ENCODE measurements at regions of chr1 and their contacts with region 1.

Region 1: GRCh38 chr1:113811888-113812660 is at the start of gene RSBN1:
- DNase-seq: peak; percentile 98 to 100 (median 99)
- H3K4me3 ChIP-seq: peak within 1 kb of the TSS; percentile 96 to 97
- H3K4me3 Mint-ChIP-seq: peak within 1 kb of the TSS; percentile 96 to 100 (median 99)
- H3K27ac ChIP-seq: peak within 1 kb of the TSS; percentile 93
- H3K27ac Mint-ChIP-seq: peak within 1 kb of the TSS; percentile 96 to 100 (median 99)
- H3K4me1 ChIP-seq: peaks cover 36% of the 10 kb centered on the region
- H3K4me1 Mint-ChIP-seq: peaks cover 22 to 45% (median 29%) of the 10 kb centered on the region in 4 donors
- H3K27me3 ChIP-seq: no peaks in the 10 kb centered on the region
- H3K27me3 Mint-ChIP-seq: no peaks in the 10 kb centered on the region
- total RNA-seq, gene RSBN1: 58.7 to 60.2 TPM

Region 2: GRCh38 chr1:112955781-112956543 is 856.1 kb before region 1 on chr1 and contains the start of gene SLC16A1:
- CTCF ChIA-PET with region 1: no interaction called
- POLR2A ChIA-PET with region 1: interaction called, 7 read pairs
- intact Hi-C with region 1: loop called (anchors 10 kb)
- DNase-seq: peak; percentile 85 to 89 (median 87)
- H3K4me3 ChIP-seq: peak within 1 kb of the TSS; percentile 59 to 96
- H3K4me3 Mint-ChIP-seq: peak within 1 kb of the TSS; percentile 76 to 99 (median 97)
- H3K27ac ChIP-seq: peak within 1 kb of the TSS; percentile 80
- H3K27ac Mint-ChIP-seq: peak within 1 kb of the TSS; percentile 68 to 98 (median 95)
- H3K4me1 ChIP-seq: peaks cover 34% of the 10 kb centered on the region
- H3K4me1 Mint-ChIP-seq: peaks cover 38 to 73% (median 52%) of the 10 kb centered on the region in 4 donors
- H3K27me3 ChIP-seq: no peaks in the 10 kb centered on the region
- H3K27me3 Mint-ChIP-seq: no peaks in the 10 kb centered on the region
- total RNA-seq, gene SLC16A1: 9.7 to 12.7 TPM

Region 3: GRCh38 chr1:113389953-113390834 is 421.9 kb before region 1 on chr1 and contains the start of gene MAGI3:
- CTCF ChIA-PET with region 1: no interaction called
- POLR2A ChIA-PET with region 1: interaction called, 3 read pairs
- intact Hi-C with region 1: loop called (anchors 1 kb)
- DNase-seq: peak; percentile 92 to 94 (median 93)
- H3K4me3 ChIP-seq: peak within 1 kb of the TSS; percentile 44 to 89
- H3K4me3 Mint-ChIP-seq: peak within 1 kb of the TSS; percentile 88 to 98 (median 92)
- H3K27ac ChIP-seq: peak within 1 kb of the TSS; percentile 60
- H3K27ac Mint-ChIP-seq: peak within 1 kb of the TSS; percentile 80 to 95 (median 91)
- H3K4me1 ChIP-seq: peaks cover 30% of the 10 kb centered on the region
- H3K4me1 Mint-ChIP-seq: peaks cover 20 to 36% (median 23%) of the 10 kb centered on the region in 4 donors
- H3K27me3 ChIP-seq: no peaks in the 10 kb centered on the region
- H3K27me3 Mint-ChIP-seq: no peaks in the 10 kb centered on the region
- total RNA-seq, gene MAGI3: 6.5 to 6.7 TPM

Region 4: GRCh38 chr1:113783254-113784099 is 28.6 kb before region 1 on chr1:
- CTCF ChIA-PET with region 1: interaction called, 11 read pairs
- POLR2A ChIA-PET with region 1: interaction called, 57 read pairs
- intact Hi-C with region 1: loop called (anchors 1 kb)
- DNase-seq: peak; percentile 66 to 84 (median 73)
- H3K4me3 ChIP-seq: peak overlapping the region in 1 of 2 donors; percentile 14
- H3K4me3 Mint-ChIP-seq: peak overlapping the region in 7 of 8 donors; percentile 44 to 89 (median 72)
- H3K27ac ChIP-seq: peak overlapping the region; percentile 48
- H3K27ac Mint-ChIP-seq: peak overlapping the region in 2 of 7 donors; percentile 77 to 93
- H3K4me1 ChIP-seq: peaks cover 100% of the 10 kb centered on the region
- H3K4me1 Mint-ChIP-seq: peaks cover 30 to 47% (median 38%) of the 10 kb centered on the region in 4 donors
- H3K27me3 ChIP-seq: no peaks in the 10 kb centered on the region
- H3K27me3 Mint-ChIP-seq: no peaks in the 10 kb centered on the region

Region 5: DNA sequence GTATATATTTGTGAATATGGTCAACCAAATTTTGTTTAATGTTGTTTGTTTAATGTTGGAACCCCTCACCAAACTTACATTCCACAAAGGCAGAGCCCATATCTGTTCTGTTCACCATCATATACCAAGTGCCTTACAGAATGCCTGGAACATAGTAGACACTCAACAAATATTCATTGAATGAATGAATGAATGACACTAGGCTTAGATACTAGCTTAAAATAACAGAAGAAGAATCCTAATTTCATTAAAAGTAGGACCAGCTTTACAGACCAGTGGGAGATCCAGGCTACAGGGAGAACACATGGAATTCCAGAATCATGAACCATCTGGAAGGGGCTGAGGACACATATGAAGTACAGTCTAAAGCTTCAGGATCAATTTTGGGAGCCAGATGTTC is 11.0 kb after region 1 on chr1:
- CTCF ChIA-PET with region 1: no interaction called
- POLR2A ChIA-PET with region 1: no interaction called
- intact Hi-C with region 1: no loop called
- DNase-seq: no peak
- H3K4me3 ChIP-seq: no peak overlapping the region
- H3K4me3 Mint-ChIP-seq: no peak overlapping the region
- H3K27ac ChIP-seq: no peak overlapping the region
- H3K27ac Mint-ChIP-seq: peak overlapping the region in 2 of 7 donors; percentile 4 to 74
- H3K4me1 ChIP-seq: no peaks in the 10 kb centered on the region
- H3K4me1 Mint-ChIP-seq: no peaks in the 10 kb centered on the region
- H3K27me3 ChIP-seq: no peaks in the 10 kb centered on the region
- H3K27me3 Mint-ChIP-seq: no peaks in the 10 kb centered on the region

Region 6: DNA sequence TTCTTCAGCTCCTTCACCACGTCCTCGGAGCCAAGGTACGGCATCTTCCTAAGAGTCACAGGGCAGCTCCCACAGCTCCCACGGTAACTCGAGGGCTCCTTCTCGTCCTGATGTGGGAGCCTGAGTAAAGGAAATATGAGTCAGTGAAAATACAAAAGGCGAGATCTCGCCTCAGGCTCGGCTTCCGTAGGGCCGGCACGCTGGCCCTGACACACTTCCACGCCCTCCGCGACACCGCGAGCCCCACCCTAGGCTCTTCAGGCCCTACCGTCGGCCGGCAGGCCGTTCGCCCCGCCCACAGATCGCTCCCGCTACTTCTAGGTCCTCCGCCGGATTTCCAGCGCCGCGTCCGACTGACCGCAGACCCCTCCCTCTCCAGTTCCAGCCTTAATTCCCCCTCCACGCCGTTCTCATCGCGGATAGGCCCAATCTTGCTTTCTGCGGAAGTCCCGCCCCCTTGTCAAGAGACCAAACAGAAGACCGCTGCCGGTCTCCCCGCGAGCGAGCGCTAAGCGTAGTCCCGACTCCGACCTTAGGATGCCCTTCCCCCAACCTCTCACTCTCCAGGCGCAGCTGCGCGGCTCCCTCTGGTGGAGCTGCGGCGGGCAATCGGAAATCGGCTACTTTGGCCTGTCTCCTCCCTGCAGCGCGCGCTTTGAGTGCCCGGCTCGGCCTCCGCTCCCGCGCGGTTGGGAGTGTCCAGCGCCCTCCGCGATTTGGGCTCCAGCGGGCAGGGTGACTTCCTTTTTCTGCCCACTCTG is 92.8 kb after region 1 on chr1 and contains the starts of genes AP4B1 and DCLRE1B:
- CTCF ChIA-PET with region 1: interaction called, 7 read pairs
- POLR2A ChIA-PET with region 1: interaction called, 43 read pairs
- intact Hi-C with region 1: loop called (anchors 1 kb)
- DNase-seq: peak; percentile 97 to 99 (median 98)
- H3K4me3 ChIP-seq: peak within 1 kb of the TSS; percentile 68 to 98
- H3K4me3 Mint-ChIP-seq: peak within 1 kb of the TSS; percentile 94 to 100 (median 99)
- H3K27ac ChIP-seq: peak within 1 kb of the TSS; percentile 96
- H3K27ac Mint-ChIP-seq: peak within 1 kb of the TSS; percentile 96 to 100 (median 100)
- H3K4me1 ChIP-seq: peaks cover 44% of the 10 kb centered on the region
- H3K4me1 Mint-ChIP-seq: peaks cover 36 to 74% (median 47%) of the 10 kb centered on the region in 4 donors
- H3K27me3 ChIP-seq: no peaks in the 10 kb centered on the region
- H3K27me3 Mint-ChIP-seq: no peaks in the 10 kb centered on the region
- total RNA-seq, gene AP4B1: 74.5 to 75.5 TPM
- total RNA-seq, gene DCLRE1B: 5.1 to 5.4 TPM

Region 7: GRCh38 chr1:114511032-114511785 is 699.1 kb after region 1 on chr1 and contains the start of gene TRIM33:
- CTCF ChIA-PET with region 1: no interaction called
- POLR2A ChIA-PET with region 1: no interaction called
- intact Hi-C with region 1: loop called (anchors 1 kb)
- DNase-seq: peak; percentile 91 to 95 (median 94)
- H3K4me3 ChIP-seq: peak within 1 kb of the TSS; percentile 75 to 85
- H3K4me3 Mint-ChIP-seq: peak within 1 kb of the TSS; percentile 97 to 100 (median 98)
- H3K27ac ChIP-seq: peak within 1 kb of the TSS; percentile 96
- H3K27ac Mint-ChIP-seq: peak within 1 kb of the TSS; percentile 97 to 100 (median 100)
- H3K4me1 ChIP-seq: peaks cover 41% of the 10 kb centered on the region
- H3K4me1 Mint-ChIP-seq: peaks cover 38 to 55% (median 47%) of the 10 kb centered on the region in 4 donors
- H3K27me3 ChIP-seq: no peaks in the 10 kb centered on the region
- H3K27me3 Mint-ChIP-seq: no peaks in the 10 kb centered on the region
- total RNA-seq, gene TRIM33: 50.6 to 54.4 TPM

Measured in CD4-positive, alpha-beta memory T cell (primary cell).